ENCODE measurements at regions of chr1 and their contacts with region 1.

Region 1: DNA sequence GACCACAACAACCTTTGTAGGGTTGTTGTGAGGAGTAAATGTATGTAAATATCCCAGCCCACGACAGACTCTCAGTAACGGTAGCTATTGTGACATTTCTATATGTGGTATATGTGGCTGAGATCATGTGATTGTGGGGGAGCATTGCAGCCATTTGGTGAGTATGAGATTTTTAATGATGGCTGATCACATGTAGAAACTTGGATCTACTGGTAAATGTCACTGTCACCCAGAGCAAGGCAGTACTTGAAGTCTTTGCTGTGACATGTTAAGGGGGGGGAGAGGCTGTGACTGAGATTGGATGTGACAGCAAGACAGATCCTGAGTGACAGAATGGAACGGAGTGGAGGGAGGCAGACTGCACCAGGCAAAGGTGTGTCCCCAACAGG is 23.9 kb upstream of the MEF2D start:
- DNase-seq: peak in 1 of 2 donors; percentile 67
- ATAC-seq: peak; percentile 81 to 89 (median 82)
- H3K4me3 ChIP-seq: no peak overlapping the region
- H3K4me3 Mint-ChIP-seq: peak overlapping the region; percentile 63
- H3K27ac ChIP-seq: peak overlapping the region; percentile 36
- H3K27ac Mint-ChIP-seq: peak overlapping the region; percentile 58 to 93
- H3K4me1 ChIP-seq: peaks cover 29% of the 10 kb centered on the region
- H3K4me1 Mint-ChIP-seq: peaks cover 33% of the 10 kb centered on the region in 2 donors
- H3K27me3 ChIP-seq: no peaks in the 10 kb centered on the region
- H3K27me3 Mint-ChIP-seq: peaks cover 0 to 2% of the 10 kb centered on the region in 2 donors
- CTCF ChIP-seq: no peak

Region 2: DNA sequence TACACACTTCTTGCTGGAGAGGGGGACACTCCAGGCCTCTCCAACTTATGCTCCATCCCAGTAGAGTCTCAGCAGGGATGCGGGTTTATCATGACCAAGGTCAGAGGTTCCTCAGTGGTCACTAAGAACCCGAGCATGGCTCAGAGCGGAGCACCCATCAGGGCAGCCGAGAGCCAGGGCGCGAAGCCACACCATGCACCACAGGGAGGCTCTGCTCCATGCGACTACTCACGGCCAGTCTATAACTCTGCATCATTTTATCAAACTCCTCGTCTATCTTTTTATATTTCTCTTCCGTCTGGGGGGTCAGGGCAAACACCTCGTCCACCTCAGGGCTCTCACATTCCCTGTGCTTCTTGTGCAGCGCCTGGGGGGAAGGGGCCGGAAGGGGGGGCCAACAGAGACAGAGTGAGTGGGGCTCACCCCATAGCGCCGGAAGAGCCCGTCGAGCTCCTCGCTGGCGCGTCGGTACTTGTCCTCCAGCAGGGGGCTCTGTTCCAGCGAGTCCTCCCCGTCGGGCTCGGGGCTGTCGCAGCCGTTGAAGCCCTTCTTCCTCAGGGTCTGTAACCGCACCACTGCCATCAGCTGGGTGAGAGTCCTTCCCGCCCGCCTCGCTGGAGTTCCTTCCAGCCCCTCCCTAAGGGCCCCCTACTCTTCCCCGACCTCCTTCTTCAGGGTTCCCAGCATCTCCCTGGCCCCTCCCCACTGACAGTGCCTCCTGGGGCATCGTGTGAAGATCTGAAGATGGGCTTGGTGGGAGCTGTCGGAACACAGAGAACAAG is 43.9 kb before region 1 on chr1:
- intact Hi-C with region 1: loop called (anchors 1 kb)
- DNase-seq: peak; percentile 68 to 91
- ATAC-seq: peak; percentile 80 to 89 (median 86)
- H3K4me3 ChIP-seq: no peak overlapping the region
- H3K4me3 Mint-ChIP-seq: peak overlapping the region; percentile 58
- H3K27ac ChIP-seq: peak overlapping the region; percentile 13
- H3K27ac Mint-ChIP-seq: peak overlapping the region; percentile 90 to 93
- H3K4me1 ChIP-seq: peaks cover 34% of the 10 kb centered on the region
- H3K4me1 Mint-ChIP-seq: peaks cover 37 to 61% of the 10 kb centered on the region in 2 donors
- H3K27me3 ChIP-seq: no peaks in the 10 kb centered on the region
- H3K27me3 Mint-ChIP-seq: no peaks in the 10 kb centered on the region
- CTCF ChIP-seq: peak; percentile 82